HCT116 (cell line): ENCODE measurements at regions of chr2 and their contacts with region 1.

Region 1: DNA sequence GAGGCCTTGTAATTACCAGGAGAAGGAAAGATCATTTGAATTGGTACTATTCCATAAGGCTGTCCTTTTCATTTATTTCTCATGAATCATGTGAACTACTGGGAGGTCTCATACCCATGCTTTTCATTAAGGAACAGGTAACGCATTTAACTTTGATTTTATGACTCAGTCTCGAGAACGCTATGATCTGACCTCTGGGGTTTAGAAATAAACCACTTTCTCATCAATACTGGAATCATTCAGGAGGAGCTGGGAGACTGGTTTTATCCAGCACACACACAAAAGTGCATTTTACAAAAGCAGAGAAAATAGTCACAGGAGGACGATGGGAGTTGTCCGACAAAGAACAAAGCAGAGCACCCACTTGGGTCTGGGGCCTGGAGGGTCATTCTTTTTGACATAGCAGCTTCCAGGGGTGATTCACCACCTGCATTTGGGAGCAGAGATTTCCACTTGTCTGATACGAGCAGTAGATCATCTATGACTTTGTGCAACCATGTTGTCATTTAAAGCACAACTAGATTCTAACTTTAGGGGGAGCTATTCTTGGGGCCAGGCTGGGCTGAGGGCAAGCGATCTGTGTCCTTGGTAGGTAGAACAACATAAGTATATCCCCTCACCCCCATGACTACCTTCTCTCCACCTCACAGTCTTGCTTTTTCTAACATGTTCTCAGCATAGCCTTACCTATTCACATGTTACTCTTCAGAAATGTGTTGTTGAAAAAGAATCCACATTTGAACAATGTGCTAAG is 95.9 kb upstream of the SCG2 start:
- DNase-seq: peak; percentile 96
- ATAC-seq: peak; percentile 75
- H3K4me3 ChIP-seq: peak overlapping the region in 1 of 2 experiments; percentile 2; a peak in 1 of 4 replicates
- H3K27ac ChIP-seq: peak overlapping the region; percentile 95
- H3K4me1 ChIP-seq: peaks cover 69 to 76% of the 10 kb centered on the region in 2 experiments
- H3K27me3 ChIP-seq: no peaks in the 10 kb centered on the region
- CTCF ChIP-seq: peak; percentile 20 to 60 (median 59); a peak in 4 of 6 replicates
- POLR2A ChIP-seq: no peak
- RAD21 ChIP-seq: no peak; the same call in none of the 2 replicates

Region 2: DNA sequence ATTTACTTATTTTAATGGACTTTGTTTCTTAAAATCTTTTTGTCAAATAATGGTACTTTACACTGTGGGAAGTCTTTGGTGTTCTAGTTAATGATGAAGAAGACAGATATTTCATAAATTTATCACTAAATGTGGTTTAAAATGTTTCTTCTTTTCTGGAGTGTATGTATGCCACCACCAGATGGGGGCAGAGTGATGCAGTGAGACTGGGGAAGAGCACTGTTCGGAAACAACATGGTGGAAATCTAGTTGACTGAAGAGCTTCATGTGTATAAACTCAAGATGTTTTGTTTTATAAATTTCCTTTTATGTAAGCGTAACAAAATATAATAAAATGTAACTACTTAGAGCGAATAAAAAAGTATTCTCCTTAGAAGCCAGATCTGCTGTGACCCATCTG is 450.9 kb before region 1 on chr2:
- CTCF ChIA-PET with region 1: interaction called, 10 read pairs
- POLR2A ChIA-PET with region 1: no interaction called
- RAD21 ChIA-PET with region 1: no interaction called
- intact Hi-C with region 1: no loop called
- DNase-seq: peak; percentile 28
- ATAC-seq: peak; percentile 80
- H3K4me3 ChIP-seq: no peak overlapping the region
- H3K27ac ChIP-seq: no peak overlapping the region
- H3K4me1 ChIP-seq: no peaks in the 10 kb centered on the region
- H3K27me3 ChIP-seq: no peaks in the 10 kb centered on the region
- CTCF ChIP-seq: peak; percentile 58 to 81 (median 61); a peak in 5 of 6 replicates
- POLR2A ChIP-seq: no peak
- RAD21 ChIP-seq: peak; percentile 89

Region 3: GRCh38 chr2:223560749-223561435 is 137.2 kb before region 1 on chr2:
- CTCF ChIA-PET with region 1: no interaction called
- POLR2A ChIA-PET with region 1: no interaction called
- RAD21 ChIA-PET with region 1: no interaction called
- intact Hi-C with region 1: loop called (anchors 1 kb)
- DNase-seq: peak; percentile 88
- ATAC-seq: peak; percentile 56
- H3K4me3 ChIP-seq: peak overlapping the region in 1 of 2 experiments; percentile 24; a peak in 1 of 4 replicates
- H3K27ac ChIP-seq: peak overlapping the region; percentile 98
- H3K4me1 ChIP-seq: peaks cover 85 to 99% of the 10 kb centered on the region in 2 experiments
- H3K27me3 ChIP-seq: no peaks in the 10 kb centered on the region
- CTCF ChIP-seq: peak in 2 of 3 experiments; percentile 16 to 24; a peak in 3 of 6 replicates
- POLR2A ChIP-seq: no peak
- RAD21 ChIP-seq: peak; percentile 43

Region 4: DNA sequence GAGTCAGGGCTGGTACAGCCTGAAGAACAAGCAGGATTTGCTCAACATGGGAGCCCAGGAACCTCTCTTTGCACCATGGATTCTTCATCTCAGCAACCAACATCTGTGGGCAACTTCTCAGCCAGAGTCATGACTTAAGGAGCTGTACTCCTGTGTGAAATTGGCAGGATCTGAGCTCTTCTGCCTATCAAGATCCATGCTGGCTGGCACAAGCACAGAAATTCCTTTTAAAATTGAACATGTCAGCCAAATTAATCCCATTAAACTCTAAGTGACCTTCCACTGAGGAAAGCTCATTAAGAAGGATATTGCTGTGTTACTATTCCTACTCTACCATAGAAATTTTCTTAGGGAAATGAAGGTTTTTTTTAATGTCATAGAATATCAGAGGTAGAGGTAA is 14.6 kb after region 1 on chr2:
- CTCF ChIA-PET with region 1: interaction called, 4 read pairs
- POLR2A ChIA-PET with region 1: interaction called, 14 read pairs
- RAD21 ChIA-PET with region 1: no interaction called
- intact Hi-C with region 1: no loop called
- DNase-seq: no peak
- ATAC-seq: no peak
- H3K4me3 ChIP-seq: no peak overlapping the region
- H3K27ac ChIP-seq: no peak overlapping the region
- H3K4me1 ChIP-seq: peaks cover 2 to 9% of the 10 kb centered on the region in 2 experiments; a peak in 3 of 4 replicates
- H3K27me3 ChIP-seq: no peaks in the 10 kb centered on the region
- CTCF ChIP-seq: no peak
- POLR2A ChIP-seq: no peak
- RAD21 ChIP-seq: no peak

Region 5: DNA sequence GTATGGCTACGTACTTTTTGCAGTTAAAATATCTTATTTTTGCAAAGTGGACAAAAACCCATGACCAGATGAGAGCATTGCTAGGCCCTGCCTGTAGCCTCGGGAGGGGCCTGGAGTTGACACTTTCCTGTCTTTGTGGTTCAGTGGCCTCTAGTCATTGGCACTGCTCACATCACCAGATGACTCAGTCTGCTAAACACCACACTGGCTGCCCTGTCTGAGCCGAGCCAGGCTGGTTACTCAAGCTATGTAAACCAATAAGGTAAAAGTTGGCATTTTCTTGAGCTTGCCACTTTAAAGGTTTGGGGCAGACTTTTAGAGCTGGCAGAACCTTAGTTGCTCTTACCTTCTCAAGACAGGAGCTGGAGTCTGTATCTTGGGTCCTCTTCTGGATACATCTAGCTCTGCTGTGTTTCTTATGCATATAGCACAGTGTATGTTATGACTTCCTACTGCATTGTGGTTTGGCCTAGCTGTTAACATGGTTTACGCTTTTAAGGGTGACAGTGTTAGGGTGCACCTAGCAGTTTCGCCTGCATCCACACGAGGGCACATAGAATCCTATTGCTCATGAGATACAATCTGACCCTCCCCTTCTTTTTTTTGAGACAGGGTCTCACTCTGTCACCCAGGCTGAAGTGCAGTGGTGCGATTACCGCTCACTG is 62.9 kb after region 1 on chr2:
- CTCF ChIA-PET with region 1: no interaction called
- POLR2A ChIA-PET with region 1: interaction called, 30 read pairs
- RAD21 ChIA-PET with region 1: interaction called, 3 to 4 read pairs
- intact Hi-C with region 1: loop called (anchors 2 kb)
- DNase-seq: peak; percentile 96
- ATAC-seq: peak; percentile 90
- H3K4me3 ChIP-seq: 0 out of 4 replicates have a peak overlapping the region, but pooled peaks of 1 of the 2 experiments have one; percentile 23
- H3K27ac ChIP-seq: peak overlapping the region; percentile 91
- H3K4me1 ChIP-seq: peaks cover 56 to 63% of the 10 kb centered on the region in 2 experiments
- H3K27me3 ChIP-seq: no peaks in the 10 kb centered on the region
- CTCF ChIP-seq: peak in 2 of 3 experiments; percentile 56 to 59; a peak in 4 of 6 replicates
- POLR2A ChIP-seq: no peak
- RAD21 ChIP-seq: peak; percentile 49